HCT116 (cell line): ENCODE measurements at regions of chr20 and their contacts with region 1.

Region 1: GRCh38 chr20:17843246-17844132 is 125.1 kb downstream of the SNX5 start:
- DNase-seq: peak; percentile 88
- ATAC-seq: peak; percentile 86
- H3K4me3 ChIP-seq: peak overlapping the region; percentile 40 to 50
- H3K27ac ChIP-seq: peak overlapping the region; percentile 99
- H3K4me1 ChIP-seq: peaks cover 61 to 75% of the 10 kb centered on the region in 2 experiments
- H3K27me3 ChIP-seq: no peaks in the 10 kb centered on the region
- CTCF ChIP-seq: no peak
- POLR2A ChIP-seq: no peak
- RAD21 ChIP-seq: no peak

Region 2: GRCh38 chr20:17747431-17747867 is 96.0 kb before region 1 on chr20:
- CTCF ChIA-PET with region 1: no interaction called
- POLR2A ChIA-PET with region 1: no interaction called
- RAD21 ChIA-PET with region 1: no interaction called
- intact Hi-C with region 1: loop called (anchors 2 kb)
- DNase-seq: peak; percentile 29
- ATAC-seq: peak; percentile 98
- H3K4me3 ChIP-seq: peak overlapping the region; percentile 23 to 29
- H3K27ac ChIP-seq: no peak overlapping the region
- H3K4me1 ChIP-seq: peaks cover 8 to 19% of the 10 kb centered on the region in 2 experiments; a peak in 3 of 4 replicates
- H3K27me3 ChIP-seq: no peaks in the 10 kb centered on the region
- CTCF ChIP-seq: no peak
- POLR2A ChIP-seq: no peak
- RAD21 ChIP-seq: no peak

Region 3: DNA sequence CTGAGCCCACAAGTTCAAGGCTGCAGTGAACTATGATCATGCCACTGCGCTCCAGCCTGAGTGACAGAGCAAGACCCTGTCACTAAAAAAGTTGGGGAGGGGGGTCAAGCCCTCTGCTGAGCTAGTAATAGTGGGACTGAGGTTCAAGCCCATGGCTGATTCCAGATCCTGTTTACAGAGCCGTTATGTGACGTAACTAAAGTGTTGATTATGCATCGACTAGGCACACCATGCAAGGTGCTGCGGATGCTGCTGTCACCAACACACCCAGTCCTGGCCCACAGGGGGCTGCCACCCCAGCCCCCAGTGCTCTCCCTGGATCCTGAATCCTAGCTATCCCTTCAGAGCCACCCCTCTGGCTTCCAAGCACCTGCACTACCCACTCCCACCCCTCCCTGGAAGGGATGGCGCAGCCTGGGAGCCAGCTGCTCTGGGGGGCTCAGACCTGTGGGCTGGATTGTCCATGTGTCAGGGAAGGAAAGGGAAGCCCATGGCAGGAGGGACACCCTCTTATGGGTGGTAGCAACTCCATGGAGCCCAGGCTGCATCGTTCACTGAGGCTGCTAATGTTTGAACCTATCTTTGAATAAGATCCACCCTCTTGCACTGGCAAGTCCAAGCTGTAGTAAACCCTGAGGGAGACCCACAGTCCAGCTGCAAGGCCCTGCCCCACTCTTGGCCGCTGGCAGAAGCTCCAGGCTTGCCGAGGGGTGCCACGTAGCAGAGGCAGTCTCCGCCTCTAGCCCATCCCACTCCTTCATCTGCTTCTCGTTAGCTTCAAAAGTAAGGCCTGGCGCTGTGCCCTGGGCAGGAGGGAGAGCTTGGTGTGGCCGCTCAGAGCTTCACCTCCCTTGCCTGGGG is 30.2 kb after region 1 on chr20:
- CTCF ChIA-PET with region 1: no interaction called
- POLR2A ChIA-PET with region 1: interaction called, 11 read pairs
- RAD21 ChIA-PET with region 1: no interaction called
- intact Hi-C with region 1: no loop called
- DNase-seq: peak; percentile 57
- ATAC-seq: peak; percentile 92
- H3K4me3 ChIP-seq: peak overlapping the region; percentile 19 to 30
- H3K27ac ChIP-seq: peak overlapping the region; percentile 28; the same call in 1 of the 2 replicates
- H3K4me1 ChIP-seq: peaks cover 23 to 32% of the 10 kb centered on the region in 2 experiments
- H3K27me3 ChIP-seq: peaks cover 6% of the 10 kb centered on the region; the same call in 1 of the 2 replicates
- CTCF ChIP-seq: no peak
- POLR2A ChIP-seq: no peak
- RAD21 ChIP-seq: no peak